Activated T-helper 1 cell treated with anti-CD3 and anti-CD28 coated beads, Interleukin-12 subunit alpha, Interleukin-12 subunit beta, Interleukin-2, Interleukin-4 antibody, amounts not matched to agents 30 ng/mL and 10 ng/mL and 1 ng/mL, durations not matched to agents 14 hours and 24 hours and 36 hours (primary cell): ENCODE measurements at regions of chr19 and their contacts with region 1.

Region 1: DNA sequence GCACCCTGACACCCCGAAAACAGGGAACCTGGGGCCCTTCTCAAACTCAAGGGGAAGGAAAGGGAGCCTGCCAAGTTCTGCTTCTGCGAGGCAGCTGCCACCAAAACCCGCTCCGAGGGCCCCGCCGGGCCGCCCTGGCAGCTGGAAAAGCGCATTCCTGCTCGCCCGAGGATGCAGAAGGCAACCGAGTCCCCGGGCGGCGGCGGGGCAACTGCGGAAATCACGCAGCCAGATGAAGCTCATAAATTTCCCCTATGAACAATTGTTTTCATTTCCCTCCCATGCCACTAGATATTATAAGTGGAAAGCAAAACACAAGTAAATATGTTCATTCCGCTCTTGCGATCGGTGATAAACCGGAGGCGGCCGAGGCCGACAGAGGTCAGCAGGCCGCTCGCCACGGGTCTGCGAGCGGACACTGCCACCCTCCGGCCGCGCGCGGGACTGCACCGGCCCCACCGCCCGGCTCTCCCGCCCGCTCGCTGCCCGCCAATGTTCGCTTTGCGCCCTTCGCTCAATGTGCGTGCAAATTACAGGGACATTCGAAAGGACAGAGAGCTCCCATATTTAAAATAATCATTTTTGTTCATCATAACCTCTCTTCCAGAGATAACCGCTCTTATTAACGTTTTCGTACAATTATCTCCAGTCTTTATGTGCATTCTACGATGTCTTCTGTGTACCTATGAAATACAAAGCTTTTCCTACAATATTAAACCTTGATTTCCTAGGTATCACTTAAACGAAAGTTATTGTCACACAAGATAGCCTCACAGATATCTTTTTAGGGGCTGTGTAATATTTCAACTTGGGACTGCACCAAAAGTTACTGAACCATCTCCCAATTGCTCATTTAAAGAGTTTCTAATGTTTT is 120.8 kb upstream of the ZNF507 start:
- DNase-seq: peak; percentile 28
- H3K4me3 Mint-ChIP-seq: peak overlapping the region; percentile 71
- H3K27ac Mint-ChIP-seq: no peak overlapping the region
- H3K4me1 Mint-ChIP-seq: peaks cover 7% of the 10 kb centered on the region
- H3K27me3 Mint-ChIP-seq: peaks cover 29% of the 10 kb centered on the region

Region 2: GRCh38 chr19:30227661-30228428 is 1996.8 kb before region 1 on chr19:
- intact Hi-C with region 1: loop called (anchors 10 kb)
- DNase-seq: peak; percentile 55
- H3K4me3 Mint-ChIP-seq: peak overlapping the region; percentile 3
- H3K27ac Mint-ChIP-seq: no peak overlapping the region
- H3K4me1 Mint-ChIP-seq: peaks cover 20% of the 10 kb centered on the region
- H3K27me3 Mint-ChIP-seq: peaks cover 61% of the 10 kb centered on the region

Region 3: GRCh38 chr19:30669329-30670010 is 1555.1 kb before region 1 on chr19:
- intact Hi-C with region 1: loop called (anchors 1 kb)
- DNase-seq: peak; percentile 8
- H3K4me3 Mint-ChIP-seq: no peak overlapping the region
- H3K27ac Mint-ChIP-seq: no peak overlapping the region
- H3K4me1 Mint-ChIP-seq: no peaks in the 10 kb centered on the region
- H3K27me3 Mint-ChIP-seq: no peaks in the 10 kb centered on the region

Region 4: DNA sequence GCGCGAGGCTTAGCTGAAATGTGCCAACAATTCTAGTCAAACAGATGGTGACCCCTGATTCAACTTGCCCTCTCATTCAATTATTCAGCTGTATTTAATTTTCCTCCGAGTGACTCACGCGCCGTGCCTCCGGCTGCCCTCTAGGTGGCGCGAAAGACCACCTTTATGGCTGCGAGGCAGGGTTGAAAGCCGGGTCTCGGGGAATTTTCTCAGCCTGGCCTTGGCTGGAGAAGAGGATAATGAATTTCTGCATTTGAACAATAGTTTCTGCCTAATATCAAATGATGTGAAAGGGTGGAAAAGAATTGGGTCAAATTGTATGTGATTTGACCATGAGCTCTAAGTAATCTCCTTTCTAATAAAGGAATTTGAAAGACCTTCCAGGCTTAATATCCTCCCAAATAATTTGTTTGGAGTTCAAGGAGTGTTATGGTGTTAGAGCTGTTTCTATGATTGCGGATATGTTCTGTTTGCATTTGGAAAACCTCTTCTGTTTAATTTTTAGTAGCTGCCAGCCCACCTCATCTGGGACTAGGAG is 1541.5 kb before region 1 on chr19:
- intact Hi-C with region 1: loop called (anchors 5 kb)
- DNase-seq: no peak
- H3K4me3 Mint-ChIP-seq: no peak overlapping the region
- H3K27ac Mint-ChIP-seq: no peak overlapping the region
- H3K4me1 Mint-ChIP-seq: no peaks in the 10 kb centered on the region
- H3K27me3 Mint-ChIP-seq: peaks cover 11% of the 10 kb centered on the region